ENCODE measurements at regions of chr10 and their contacts with region 1.

Region 1: DNA sequence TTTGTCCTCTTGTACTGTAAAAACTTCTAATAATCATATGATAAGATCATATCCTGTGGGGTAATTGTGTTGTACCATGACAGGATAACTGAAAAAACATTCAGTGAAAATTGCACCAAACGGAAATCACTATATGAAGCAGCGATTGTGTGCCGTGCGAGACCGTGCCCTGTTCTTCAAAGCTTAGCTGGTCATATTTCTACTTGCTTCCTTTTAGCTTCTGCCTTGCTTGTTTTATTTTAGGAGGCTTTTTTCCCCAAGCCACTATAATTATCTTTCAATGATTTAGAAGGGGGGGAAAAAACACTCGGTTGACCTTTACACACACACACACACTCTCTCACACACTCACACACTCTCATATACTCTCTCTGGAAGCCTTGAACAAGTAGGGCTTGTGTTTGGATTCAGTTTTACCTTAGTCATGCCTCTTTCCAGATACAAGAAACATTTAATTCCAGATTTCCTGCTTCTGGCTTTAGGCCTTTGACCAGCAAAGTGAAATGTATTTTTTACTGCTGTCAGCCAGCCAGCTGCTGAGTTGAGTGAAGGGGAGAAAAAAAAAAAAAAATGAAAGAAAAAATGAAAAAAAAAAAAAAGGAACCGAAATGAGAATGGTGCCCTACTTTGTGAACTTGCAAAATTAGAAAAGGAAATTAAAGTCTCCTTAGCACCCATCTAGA is 181.4 kb downstream of the ARID5B start:
- DNase-seq: peak; percentile 73
- H3K4me3 ChIP-seq: peak overlapping the region; percentile 61
- H3K27ac ChIP-seq: peak overlapping the region; percentile 87
- H3K4me1 ChIP-seq: peaks cover 54% of the 10 kb centered on the region
- CTCF ChIP-seq: no peak

Region 2: DNA sequence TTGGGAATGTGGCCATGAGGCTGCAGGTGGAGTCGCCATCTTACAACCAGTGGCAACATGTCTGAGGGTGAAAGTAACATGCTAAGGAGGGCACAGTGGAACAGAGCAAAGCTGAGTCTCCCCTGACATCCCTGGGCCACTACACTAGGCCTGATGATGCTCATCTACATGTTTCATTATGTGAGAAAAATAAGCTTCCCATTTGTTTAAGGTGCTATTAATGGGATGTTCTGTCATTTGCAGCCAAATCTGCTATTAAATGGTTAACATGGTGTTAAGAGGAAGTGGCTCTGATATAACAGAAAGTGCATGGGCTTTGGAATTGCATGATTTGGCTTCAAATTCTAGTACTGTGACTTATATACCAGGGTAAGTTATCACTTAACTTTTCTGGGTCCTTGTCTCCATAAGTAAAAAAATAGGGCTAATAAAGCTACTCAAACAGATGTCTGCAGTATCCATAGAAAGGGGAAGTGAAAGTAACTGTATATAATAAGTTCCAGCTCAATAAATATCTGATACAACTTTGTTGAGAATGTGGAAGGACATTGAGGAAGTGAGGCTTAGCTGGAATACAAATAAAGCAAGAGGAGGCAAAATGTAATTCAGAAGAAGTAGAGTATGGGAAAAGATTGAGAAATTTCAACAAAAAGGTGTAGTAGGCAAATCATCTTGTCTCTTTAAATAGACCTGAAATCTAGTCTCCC is 26.9 kb after region 1 on chr10:
- CTCF ChIA-PET with region 1: no interaction called
- POLR2A ChIA-PET with region 1: interaction called, 7 read pairs
- intact Hi-C with region 1: loop called (anchors 2 kb)
- DNase-seq: peak; percentile 89
- H3K4me3 ChIP-seq: peak overlapping the region; percentile 46
- H3K27ac ChIP-seq: peak overlapping the region; percentile 90
- H3K4me1 ChIP-seq: peaks cover 59% of the 10 kb centered on the region
- CTCF ChIP-seq: no peak

Region 3: DNA sequence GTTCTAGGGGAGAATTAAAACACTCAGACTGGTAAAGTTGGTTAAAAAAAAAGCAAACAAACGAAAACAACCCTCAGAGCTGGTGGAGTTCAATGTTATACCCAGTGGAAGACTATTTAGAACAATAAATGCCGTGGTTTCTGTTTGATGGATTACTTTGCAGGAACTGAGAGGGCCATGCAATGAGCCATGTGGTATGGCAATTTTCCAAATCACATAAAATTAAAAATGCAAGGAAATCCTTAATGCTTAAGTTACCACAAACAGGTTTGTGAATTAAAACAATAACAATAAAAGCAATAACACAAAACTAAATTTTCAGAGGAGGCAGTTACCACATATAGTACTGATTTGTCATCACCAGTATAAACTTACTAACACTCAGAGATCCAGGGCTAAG is 88.9 kb after region 1 on chr10:
- CTCF ChIA-PET with region 1: no interaction called
- POLR2A ChIA-PET with region 1: no interaction called
- intact Hi-C with region 1: no loop called
- DNase-seq: no peak
- H3K4me3 ChIP-seq: no peak overlapping the region
- H3K27ac ChIP-seq: no peak overlapping the region
- H3K4me1 ChIP-seq: peaks cover 19% of the 10 kb centered on the region
- CTCF ChIP-seq: no peak

Region 4: GRCh38 chr10:62199584-62199983 is 116.7 kb after region 1 on chr10:
- CTCF ChIA-PET with region 1: no interaction called
- POLR2A ChIA-PET with region 1: no interaction called
- intact Hi-C with region 1: loop called (anchors 10 kb)
- DNase-seq: no peak
- H3K4me3 ChIP-seq: no peak overlapping the region
- H3K27ac ChIP-seq: no peak overlapping the region
- H3K4me1 ChIP-seq: peaks cover 5% of the 10 kb centered on the region
- CTCF ChIP-seq: no peak

Region 5: DNA sequence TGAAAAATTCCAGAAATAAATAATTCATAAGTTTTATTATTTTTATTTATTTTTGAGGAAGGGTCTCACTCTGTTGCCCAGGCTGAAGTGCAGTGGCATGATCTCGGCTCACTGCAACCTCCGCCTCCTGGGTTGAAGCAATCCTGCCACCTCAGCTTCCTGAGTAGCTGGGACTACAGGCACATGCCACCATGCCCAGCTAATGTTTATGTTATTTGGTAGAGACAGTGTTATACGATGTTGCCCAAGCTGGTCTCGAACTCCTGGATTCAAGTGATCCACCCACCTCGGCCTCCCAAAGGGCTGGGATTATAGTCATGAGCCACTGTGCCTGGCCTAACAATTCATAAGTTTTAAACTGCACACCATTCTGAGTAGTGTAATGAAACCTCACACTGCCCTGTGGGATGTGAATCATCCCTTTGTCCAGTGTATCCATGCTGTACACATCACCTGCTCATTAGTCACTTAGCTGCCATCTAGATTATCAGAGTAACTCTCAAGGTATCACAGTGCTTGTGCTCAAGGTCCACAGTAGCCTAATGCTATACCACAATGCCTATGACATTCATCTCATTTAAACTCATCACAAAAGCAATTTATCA is 167.8 kb after region 1 on chr10:
- CTCF ChIA-PET with region 1: no interaction called
- POLR2A ChIA-PET with region 1: no interaction called
- intact Hi-C with region 1: no loop called
- DNase-seq: no peak
- H3K4me3 ChIP-seq: no peak overlapping the region
- H3K27ac ChIP-seq: no peak overlapping the region
- H3K4me1 ChIP-seq: no peaks in the 10 kb centered on the region
- CTCF ChIP-seq: no peak

Measured in OCI-LY7 (cell line).